A549 (cell line): ENCODE measurements at regions of chr16 and their contacts with region 1.

Region 1: DNA sequence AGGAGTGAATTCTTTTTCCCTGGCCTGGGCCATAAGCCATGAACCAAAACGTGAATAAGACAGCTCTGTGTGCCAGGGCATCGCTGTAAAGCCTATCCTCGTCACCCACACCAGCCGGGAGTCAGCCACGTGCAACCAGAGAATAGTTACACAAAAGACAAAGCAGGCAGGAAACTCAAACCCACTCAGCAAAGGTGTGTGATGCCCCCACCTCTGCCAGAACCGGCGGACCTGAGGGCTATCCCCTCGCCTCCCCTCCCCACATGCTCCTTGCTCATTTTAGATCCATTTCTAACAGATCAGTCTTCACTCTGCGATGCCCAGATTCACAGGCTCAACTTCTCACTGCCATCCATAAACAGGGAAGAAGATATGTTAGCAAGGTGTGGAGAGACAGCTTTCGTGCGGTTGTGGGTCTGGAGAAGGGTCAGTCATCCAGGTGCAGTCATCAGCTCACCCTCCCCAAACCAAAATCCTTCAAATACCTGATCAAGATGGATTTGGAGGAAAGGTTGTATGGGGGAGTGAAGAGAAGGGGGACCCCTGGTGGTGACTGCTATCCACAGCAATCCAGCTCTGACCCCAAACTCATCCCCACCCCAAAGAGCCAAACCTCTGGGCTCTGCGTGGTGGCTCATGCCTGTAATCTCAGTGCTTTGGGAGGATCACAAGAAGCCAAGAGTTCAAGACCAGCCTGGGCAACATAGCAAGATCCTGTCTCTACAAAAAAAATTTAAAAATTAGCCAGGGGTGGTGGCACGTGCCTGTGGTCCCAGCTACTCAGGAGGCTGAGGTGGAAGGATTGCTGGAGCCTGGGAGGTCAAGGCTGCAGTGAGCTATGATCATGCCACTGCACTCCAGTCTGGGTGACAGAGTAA is 219.2 kb downstream of the C16orf78 start:
- DNase-seq: peak; percentile 35 to 69
- ATAC-seq: peak; percentile 71 to 92; a peak in 5 of 6 replicates
- H3K4me3 ChIP-seq: no peak overlapping the region
- H3K27ac ChIP-seq: no peak overlapping the region
- H3K4me1 ChIP-seq: no peaks in the 10 kb centered on the region
- CTCF ChIP-seq: peak; percentile 61
- EP300 ChIP-seq: no peak
- POLR2A ChIP-seq: no peak
- RAD21 ChIP-seq: peak; percentile 53 to 54

Region 2: GRCh38 chr16:49491771-49492761 is 100.7 kb before region 1 on chr16:
- CTCF ChIA-PET with region 1: interaction called, 11 read pairs
- POLR2A ChIA-PET with region 1: no interaction called
- DNase-seq: peak; percentile 15 to 68
- ATAC-seq: peak; percentile 77 to 94
- H3K4me3 ChIP-seq: peak overlapping the region; percentile 32; the same call in 2 of the 3 replicates
- H3K27ac ChIP-seq: no peak overlapping the region
- H3K4me1 ChIP-seq: no peaks in the 10 kb centered on the region
- CTCF ChIP-seq: peak; percentile 91
- EP300 ChIP-seq: no peak
- POLR2A ChIP-seq: no peak
- RAD21 ChIP-seq: peak; percentile 46 to 60

Region 3: DNA sequence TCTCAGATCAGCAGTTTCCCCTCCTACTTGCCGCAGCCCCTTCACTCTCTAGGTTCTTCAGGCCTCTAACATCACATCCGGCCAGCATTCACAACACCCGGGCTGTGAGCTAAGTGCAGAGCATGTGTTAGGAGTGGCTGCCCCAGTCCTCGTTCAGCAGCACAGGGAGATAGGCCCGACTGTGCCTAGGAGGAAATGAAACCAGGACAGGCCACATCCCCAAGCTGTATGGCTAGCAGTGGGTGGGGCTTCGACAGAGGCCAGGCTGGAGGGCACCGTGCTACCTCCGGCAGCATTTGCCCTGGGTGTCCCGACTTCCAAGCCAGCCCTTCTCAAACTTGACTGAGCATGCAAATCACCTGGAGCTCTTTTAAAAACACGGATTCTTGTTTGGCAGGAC is 17.4 kb before region 1 on chr16:
- CTCF ChIA-PET with region 1: interaction called, 16 read pairs
- POLR2A ChIA-PET with region 1: no interaction called
- DNase-seq: no peak
- ATAC-seq: no peak
- H3K4me3 ChIP-seq: no peak overlapping the region
- H3K27ac ChIP-seq: no peak overlapping the region
- H3K4me1 ChIP-seq: no peaks in the 10 kb centered on the region
- CTCF ChIP-seq: no peak
- EP300 ChIP-seq: no peak
- POLR2A ChIP-seq: no peak
- RAD21 ChIP-seq: no peak

Region 4: DNA sequence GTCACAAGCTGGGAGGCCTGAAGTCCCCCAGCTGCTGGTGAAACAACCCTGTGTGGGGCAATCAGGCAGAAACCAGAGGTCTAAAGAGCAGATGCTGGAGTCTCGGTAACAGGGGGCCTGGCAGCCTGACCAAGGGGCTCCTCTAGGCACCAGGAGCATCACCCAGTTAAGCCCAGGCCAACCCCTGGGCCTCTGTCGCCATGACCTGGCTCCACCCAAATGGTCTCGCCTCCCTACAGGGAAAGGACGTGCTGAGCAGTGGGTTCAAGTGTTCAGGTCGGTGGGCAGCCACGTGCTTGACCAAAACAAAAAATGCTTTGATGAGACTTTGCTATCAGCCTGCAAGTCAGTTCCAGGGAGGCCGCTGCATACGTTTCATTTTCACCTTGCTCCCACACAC is 22.8 kb after region 1 on chr16:
- CTCF ChIA-PET with region 1: no interaction called
- POLR2A ChIA-PET with region 1: no interaction called
- DNase-seq: no peak
- ATAC-seq: no peak
- H3K4me3 ChIP-seq: no peak overlapping the region
- H3K27ac ChIP-seq: no peak overlapping the region
- H3K4me1 ChIP-seq: peaks cover 7% of the 10 kb centered on the region
- CTCF ChIP-seq: no peak
- EP300 ChIP-seq: no peak
- POLR2A ChIP-seq: no peak
- RAD21 ChIP-seq: no peak

Region 5: GRCh38 chr16:49688036-49688697 is 95.4 kb after region 1 on chr16:
- CTCF ChIA-PET with region 1: no interaction called
- POLR2A ChIA-PET with region 1: no interaction called
- DNase-seq: no peak
- ATAC-seq: no peak
- H3K4me3 ChIP-seq: no peak overlapping the region
- H3K27ac ChIP-seq: no peak overlapping the region
- H3K4me1 ChIP-seq: no peaks in the 10 kb centered on the region
- CTCF ChIP-seq: no peak
- EP300 ChIP-seq: no peak
- POLR2A ChIP-seq: no peak
- RAD21 ChIP-seq: no peak